PC-3 (cell line): ENCODE measurements at regions of chr3 and their contacts with region 1.

Region 1: DNA sequence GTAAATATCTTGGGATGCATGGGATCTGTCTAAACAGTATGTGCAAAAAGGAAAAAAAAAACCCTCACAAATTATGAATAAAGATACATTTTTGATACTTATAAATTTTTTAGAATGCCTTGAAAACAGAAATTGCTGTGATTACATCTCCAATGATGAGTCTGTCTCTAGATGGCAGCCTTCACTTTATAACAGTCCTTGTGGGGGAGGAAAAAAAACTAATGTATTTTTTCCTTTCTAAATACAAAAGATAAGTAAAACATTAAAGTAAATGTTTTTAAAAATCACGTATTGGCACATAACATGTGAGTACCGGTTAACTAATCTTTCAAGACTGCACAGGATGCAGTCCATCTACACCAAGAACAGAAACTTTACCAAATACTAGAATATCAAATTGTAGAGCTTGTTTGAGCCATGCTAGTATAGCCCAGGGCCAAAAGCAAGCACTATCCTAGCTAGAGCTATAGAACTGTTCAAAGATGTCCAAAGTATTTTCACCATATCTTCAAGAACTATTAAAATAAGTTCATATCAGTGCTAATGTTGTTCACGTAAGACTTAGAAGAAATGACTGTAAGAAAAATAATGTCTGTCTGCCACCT is 206.4 kb downstream of the STAG1 start:
- DNase-seq: peak; percentile 30
- ATAC-seq: peak; percentile 42
- H3K4me3 ChIP-seq: no peak overlapping the region
- H3K27ac ChIP-seq: no peak overlapping the region
- H3K4me1 ChIP-seq: peaks cover 8% of the 10 kb centered on the region; the same call in 1 of the 2 replicates
- H3K27me3 ChIP-seq: no peaks in the 10 kb centered on the region
- CTCF ChIP-seq: peak; percentile 50

Region 2: DNA sequence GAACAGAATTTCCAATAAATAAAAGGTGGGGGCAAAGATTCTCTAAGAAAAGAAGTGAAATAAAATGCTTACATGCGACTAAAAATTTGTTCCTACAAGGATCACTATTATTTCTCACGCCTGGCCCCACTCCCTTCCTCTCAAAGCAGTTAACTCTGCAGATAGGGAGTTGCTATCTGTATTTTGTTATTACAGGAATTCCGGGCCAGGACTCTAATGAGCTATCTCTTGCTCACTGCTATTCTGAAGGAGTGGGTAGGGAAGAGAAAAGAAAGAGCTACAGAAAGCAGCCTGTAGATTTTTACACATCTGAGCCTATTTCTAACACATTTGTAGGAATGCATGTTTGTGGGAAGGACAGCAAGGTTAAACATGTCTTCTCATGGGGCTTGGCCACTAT is 155.2 kb before region 1 on chr3:
- CTCF ChIA-PET with region 1: no interaction called
- POLR2A ChIA-PET with region 1: no interaction called
- intact Hi-C with region 1: loop called (anchors 2 kb)
- DNase-seq: no peak
- ATAC-seq: no peak
- H3K4me3 ChIP-seq: no peak overlapping the region
- H3K27ac ChIP-seq: no peak overlapping the region
- H3K4me1 ChIP-seq: no peaks in the 10 kb centered on the region
- H3K27me3 ChIP-seq: no peaks in the 10 kb centered on the region
- CTCF ChIP-seq: no peak

Region 3: DNA sequence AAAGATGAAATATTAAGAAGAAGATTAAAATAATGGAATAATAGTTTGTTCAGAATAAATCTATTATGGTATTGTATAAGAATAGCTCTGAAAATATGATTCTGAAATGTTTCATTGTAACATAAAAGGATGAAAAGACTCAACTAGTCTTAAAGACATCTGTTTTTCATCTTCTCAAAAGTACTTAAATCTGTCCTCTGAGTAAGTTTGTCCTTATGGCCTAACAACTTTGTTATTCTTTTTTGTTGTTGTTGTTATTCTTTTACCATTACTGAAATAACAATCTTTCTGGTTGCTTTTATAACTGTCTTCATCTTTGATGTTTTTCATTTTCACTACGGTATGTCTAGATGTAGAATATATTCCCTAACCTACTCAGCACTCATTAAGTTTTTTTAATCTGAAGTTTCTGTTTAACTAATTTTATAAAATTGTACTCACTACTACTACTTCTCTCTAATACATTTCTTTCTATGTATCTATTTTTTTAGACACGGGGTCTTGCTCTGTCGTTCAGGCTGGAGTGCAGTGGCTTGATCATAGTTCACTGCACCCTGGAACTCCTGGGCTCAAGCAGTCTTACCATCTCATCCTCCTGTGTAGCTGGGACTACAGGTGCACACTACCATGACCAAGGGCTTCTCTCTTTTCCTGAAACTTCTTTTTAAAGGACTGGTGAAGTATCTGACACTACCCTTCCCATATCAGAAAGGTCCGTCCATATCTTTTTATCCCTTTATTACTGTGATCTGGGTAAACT is 54.9 kb before region 1 on chr3:
- CTCF ChIA-PET with region 1: no interaction called
- POLR2A ChIA-PET with region 1: no interaction called
- intact Hi-C with region 1: no loop called
- DNase-seq: no peak
- ATAC-seq: no peak
- H3K4me3 ChIP-seq: no peak overlapping the region
- H3K27ac ChIP-seq: no peak overlapping the region
- H3K4me1 ChIP-seq: no peaks in the 10 kb centered on the region
- H3K27me3 ChIP-seq: no peaks in the 10 kb centered on the region
- CTCF ChIP-seq: no peak

Region 4: DNA sequence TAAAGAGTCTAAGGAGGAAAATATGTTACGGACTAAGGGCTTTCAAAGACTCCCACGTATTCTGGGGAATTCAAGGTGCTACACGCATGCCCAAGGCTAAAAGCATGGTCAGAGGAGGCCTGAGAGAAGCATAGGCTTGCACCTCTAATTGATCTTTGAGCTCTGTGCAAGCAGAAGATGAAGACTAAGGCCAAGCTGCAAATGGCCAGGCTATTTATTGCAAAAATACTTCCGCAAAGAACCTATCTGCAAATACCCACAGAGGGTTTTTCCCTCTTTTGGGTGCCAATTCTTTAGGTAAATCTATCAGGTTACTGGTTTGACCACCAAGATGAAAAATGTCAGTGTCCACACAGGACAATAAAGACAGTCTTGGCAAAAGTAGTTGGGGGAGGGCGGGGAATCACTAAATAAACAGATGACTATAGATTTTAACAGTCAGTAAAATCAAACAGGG is 86.9 kb after region 1 on chr3:
- CTCF ChIA-PET with region 1: no interaction called
- POLR2A ChIA-PET with region 1: no interaction called
- intact Hi-C with region 1: loop called (anchors 10 kb)
- DNase-seq: peak; percentile 92
- ATAC-seq: peak; percentile 91
- H3K4me3 ChIP-seq: peak overlapping the region; percentile 48
- H3K27ac ChIP-seq: peak overlapping the region; percentile 89
- H3K4me1 ChIP-seq: peaks cover 25% of the 10 kb centered on the region
- H3K27me3 ChIP-seq: no peaks in the 10 kb centered on the region
- CTCF ChIP-seq: no peak